ENCODE measurements at regions of chr2 and their contacts with region 1.

Region 1: DNA sequence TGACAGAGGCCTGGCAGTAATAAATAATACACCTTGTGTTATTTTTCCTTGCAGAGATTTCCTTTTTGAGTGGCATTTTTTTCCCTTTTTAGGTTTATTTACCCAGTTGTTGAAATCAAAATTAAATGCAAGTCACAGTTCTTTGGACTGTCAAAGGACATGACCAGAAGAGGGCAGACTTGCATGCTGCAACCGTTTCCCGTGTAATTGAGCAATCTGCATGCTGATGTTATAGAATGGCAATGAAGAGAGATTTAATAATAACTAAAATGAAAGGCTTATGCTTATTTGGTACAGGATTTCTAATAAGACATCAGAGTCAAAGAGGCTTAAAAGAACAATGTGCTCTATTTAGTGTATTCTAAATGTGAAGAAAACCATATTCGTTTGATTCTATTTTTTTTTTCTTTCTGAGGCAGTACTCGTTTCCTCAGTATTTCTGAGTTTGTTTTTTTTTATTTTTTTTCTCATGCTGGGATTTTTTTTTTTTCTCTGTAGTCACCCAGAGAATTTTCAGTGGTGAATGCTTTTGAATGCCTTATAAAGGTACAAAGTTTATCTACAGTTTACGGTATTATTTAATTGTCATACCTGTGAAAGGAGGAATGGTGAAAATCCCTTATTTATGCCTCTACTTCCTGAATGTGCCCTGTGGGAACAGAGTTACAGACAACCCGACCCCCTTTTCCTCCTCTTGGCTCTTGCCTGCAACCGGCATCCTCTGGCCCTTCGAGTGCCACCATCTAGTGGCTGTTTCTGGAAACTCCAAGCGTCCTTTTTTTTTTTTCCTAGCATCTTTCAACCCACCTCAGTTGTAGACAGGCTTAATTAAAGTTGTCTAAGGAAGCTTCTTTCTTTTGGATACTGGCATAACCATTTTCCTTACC is 368.5 kb downstream of the LRRTM1 start:
- DNase-seq: peak; percentile 63
- H3K4me3 ChIP-seq: no peak overlapping the region
- H3K27ac ChIP-seq: no peak overlapping the region
- H3K4me1 ChIP-seq: no peaks in the 10 kb centered on the region
- H3K27me3 ChIP-seq: no peaks in the 10 kb centered on the region
- CTCF ChIP-seq: peak; percentile 59

Region 2: GRCh38 chr2:79660557-79660956 is 275.5 kb before region 1 on chr2:
- intact Hi-C with region 1: no loop called
- DNase-seq: no peak
- H3K4me3 ChIP-seq: no peak overlapping the region
- H3K27ac ChIP-seq: no peak overlapping the region
- H3K4me1 ChIP-seq: no peaks in the 10 kb centered on the region
- H3K27me3 ChIP-seq: no peaks in the 10 kb centered on the region
- CTCF ChIP-seq: no peak

Region 3: DNA sequence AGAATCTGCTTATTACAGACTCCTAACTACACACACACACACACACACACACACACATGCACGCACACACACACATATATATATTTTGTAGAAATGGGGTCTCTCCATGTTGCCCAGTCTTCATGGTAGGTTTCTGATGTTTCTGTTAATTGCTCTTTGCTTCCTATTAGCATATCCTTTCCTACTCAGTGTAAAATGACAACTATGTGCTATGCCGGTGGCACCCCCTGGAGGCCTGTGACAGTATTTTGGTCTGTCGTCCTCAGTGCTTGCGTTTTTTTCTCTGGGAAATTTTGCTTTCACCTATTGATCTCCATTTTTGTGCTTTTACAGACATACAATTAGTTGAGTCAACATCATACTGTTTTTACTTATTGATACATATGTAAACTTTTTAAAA is 46.4 kb after region 1 on chr2:
- intact Hi-C with region 1: loop called (anchors 5 kb)
- DNase-seq: peak; percentile 71
- H3K4me3 ChIP-seq: no peak overlapping the region
- H3K27ac ChIP-seq: no peak overlapping the region
- H3K4me1 ChIP-seq: no peaks in the 10 kb centered on the region
- H3K27me3 ChIP-seq: no peaks in the 10 kb centered on the region
- CTCF ChIP-seq: peak; percentile 43